Activated T-helper 1 cell treated with anti-CD3 and anti-CD28 coated beads, Interleukin-12 subunit alpha, Interleukin-12 subunit beta, Interleukin-2, Interleukin-4 antibody, amounts not matched to agents 30 ng/mL and 10 ng/mL and 1 ng/mL, durations not matched to agents 14 hours and 24 hours and 36 hours (primary cell): ENCODE measurements at regions of chr10 and their contacts with region 1.

Region 1: DNA sequence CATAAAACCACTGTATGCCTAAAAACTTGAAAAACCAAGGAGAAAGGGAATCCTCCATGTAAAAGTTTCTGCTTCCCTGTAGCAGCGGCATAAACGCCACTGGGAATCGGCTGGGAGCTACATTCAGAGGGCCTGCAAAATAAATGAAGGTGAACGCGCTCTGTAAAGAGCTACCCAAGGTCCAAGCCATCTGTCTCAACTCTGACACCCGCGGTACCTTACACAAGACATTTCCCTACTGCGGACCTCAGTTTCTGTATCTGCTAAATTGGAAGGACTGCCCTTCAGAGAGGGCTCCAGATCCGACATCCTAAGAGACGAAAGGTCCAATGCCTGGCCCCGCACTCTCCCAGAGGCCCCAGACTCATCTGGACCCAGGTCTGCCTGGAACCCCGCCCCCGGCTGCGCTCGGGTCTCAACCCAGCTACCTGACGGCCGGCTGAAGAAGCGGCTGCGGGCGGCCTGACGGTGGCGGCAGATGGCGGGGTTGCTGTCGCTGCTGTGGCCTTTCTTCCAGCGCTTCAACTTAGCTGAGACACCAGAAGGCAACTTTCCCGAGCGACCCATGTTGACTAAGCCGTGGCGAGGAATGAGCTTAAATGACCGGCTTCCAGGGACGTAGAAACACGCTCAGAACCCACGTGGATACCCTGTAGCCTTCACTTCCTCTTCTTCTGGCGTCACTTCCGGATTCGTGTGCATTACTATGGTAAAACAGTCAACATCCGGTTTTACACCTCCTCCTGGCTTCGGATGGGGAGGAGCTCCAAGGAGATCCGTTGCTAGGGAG is at the start of gene RRP12:
- DNase-seq: peak; percentile 89
- H3K4me3 Mint-ChIP-seq: peak within 1 kb of the TSS; percentile 97
- H3K27ac Mint-ChIP-seq: peak within 1 kb of the TSS; percentile 87
- H3K4me1 Mint-ChIP-seq: peaks cover 17% of the 10 kb centered on the region
- H3K27me3 Mint-ChIP-seq: no peaks in the 10 kb centered on the region
- total RNA-seq, gene RRP12: 99.9 and 104 TPM in 2 replicates

Region 2: GRCh38 chr10:97278491-97278989 is 122.3 kb before region 1 on chr10:
- intact Hi-C with region 1: loop called (anchors 5 kb)
- DNase-seq: no peak
- H3K4me3 Mint-ChIP-seq: no peak overlapping the region
- H3K27ac Mint-ChIP-seq: no peak overlapping the region
- H3K4me1 Mint-ChIP-seq: peaks cover 12% of the 10 kb centered on the region
- H3K27me3 Mint-ChIP-seq: no peaks in the 10 kb centered on the region

Region 3: DNA sequence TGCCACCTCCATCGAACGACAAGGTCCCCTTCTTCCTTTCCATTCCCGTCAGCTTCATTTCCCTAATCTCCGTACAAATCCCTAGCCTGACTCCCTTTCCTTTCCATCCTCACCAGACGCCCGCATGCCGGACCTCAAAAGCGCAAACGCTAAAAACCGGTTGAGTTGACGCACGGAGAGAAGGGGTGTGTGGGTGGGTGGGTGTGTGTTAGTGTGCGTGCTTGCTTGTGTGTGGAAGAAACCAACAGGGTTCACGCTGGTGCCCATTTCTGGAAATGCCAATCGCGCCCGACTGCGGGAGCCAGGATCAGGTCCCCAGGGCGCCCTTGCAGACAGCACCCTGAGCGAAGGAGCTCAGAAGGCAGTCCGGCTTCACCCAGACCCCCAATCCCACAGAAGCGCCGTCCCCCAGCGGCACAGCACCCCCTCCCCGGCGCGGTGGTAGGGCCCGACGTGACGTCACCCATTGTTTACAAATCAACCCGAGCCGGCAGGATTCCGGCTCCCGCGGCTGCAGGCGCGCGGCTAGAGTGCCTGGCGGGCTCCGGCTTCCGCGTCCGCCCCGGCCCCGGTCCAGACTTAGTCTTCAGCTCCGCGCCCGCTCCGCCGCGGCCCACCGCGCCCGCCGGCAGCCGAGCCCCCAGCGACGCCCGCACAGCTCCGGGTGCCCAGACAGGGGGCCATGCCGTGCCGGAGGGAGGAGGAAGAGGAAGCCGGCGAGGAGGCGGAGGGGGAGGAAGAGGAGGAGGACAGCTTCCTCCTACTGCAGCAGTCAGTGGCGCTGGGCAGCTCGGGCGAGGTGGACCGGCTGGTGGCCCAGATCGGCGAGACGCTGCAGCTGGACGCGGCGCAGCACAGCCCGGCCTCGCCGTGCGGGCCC is 81.8 kb before region 1 on chr10 and contains the start of gene FRAT1:
- intact Hi-C with region 1: loop called (anchors 1 kb)
- DNase-seq: peak; percentile 86
- H3K4me3 Mint-ChIP-seq: peak within 1 kb of the TSS; percentile 87
- H3K27ac Mint-ChIP-seq: peak within 1 kb of the TSS; percentile 97
- H3K4me1 Mint-ChIP-seq: peaks cover 26% of the 10 kb centered on the region
- H3K27me3 Mint-ChIP-seq: peaks cover 24% of the 10 kb centered on the region
- total RNA-seq, gene FRAT1: 3.0 and 3.3 TPM in 2 replicates

Region 4: GRCh38 chr10:97412891-97413304 is 12.0 kb after region 1 on chr10:
- intact Hi-C with region 1: loop called (anchors 2 kb)
- DNase-seq: peak; percentile 52
- H3K4me3 Mint-ChIP-seq: peak overlapping the region; percentile 47
- H3K27ac Mint-ChIP-seq: peak overlapping the region; percentile 95
- H3K4me1 Mint-ChIP-seq: peaks cover 55% of the 10 kb centered on the region
- H3K27me3 Mint-ChIP-seq: no peaks in the 10 kb centered on the region

Region 5: GRCh38 chr10:97640174-97640867 is 239.5 kb after region 1 on chr10 and contains the start of gene PI4K2A:
- intact Hi-C with region 1: loop called (anchors 2 kb)
- DNase-seq: peak; percentile 99
- H3K4me3 Mint-ChIP-seq: peak within 1 kb of the TSS; percentile 96
- H3K27ac Mint-ChIP-seq: peak within 1 kb of the TSS; percentile 86
- H3K4me1 Mint-ChIP-seq: peaks cover 23% of the 10 kb centered on the region
- H3K27me3 Mint-ChIP-seq: peaks cover 1% of the 10 kb centered on the region
- total RNA-seq, gene PI4K2A: 19.3 and 19.7 TPM in 2 replicates